Activated CD4-positive, alpha-beta T cell treated with anti-CD3 and anti-CD28 coated beads for 36 hours (primary cell): ENCODE measurements at regions of chr1 and their contacts with region 1.

Region 1: DNA sequence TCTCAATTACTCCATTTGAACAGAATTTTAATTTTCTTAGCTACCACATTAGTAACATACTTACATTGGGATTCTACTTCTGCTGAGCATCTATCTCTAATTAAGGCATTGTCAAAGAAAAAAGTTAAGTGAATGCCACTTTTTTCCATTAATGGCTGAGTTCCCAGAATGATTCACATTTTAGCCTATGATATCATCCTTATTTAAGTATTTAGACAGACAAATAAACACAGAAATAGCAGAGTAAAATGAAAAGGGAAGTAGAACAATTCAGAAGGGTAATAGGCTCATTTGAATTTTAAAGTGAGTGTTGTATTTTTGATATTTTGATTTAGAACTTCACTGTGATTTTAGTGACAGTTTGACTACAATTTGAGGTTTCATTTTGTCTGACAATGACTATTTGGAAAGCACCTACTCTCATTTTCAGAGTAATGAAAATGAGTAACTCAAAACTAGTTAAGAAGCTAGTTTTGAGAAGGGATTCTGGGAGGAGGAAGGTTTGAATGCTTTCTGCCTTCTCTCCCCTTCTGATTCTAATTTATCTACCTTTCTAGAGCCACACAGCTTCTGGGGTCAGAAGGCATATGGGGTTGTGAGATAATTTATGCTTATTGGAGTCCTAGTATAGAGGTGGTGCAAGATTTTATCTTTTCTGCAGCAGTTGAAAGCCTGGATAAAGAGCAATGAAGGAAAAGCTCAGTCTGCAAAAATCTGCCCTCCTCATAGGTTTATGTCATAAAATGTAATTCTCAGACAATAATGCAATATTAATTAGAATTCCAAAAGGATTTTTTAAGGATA is 15.5 kb downstream of the LYPLAL1 start:
- DNase-seq: no peak
- ATAC-seq: peak; percentile 92
- H3K4me3 Mint-ChIP-seq: no peak overlapping the region
- H3K27ac Mint-ChIP-seq: no peak overlapping the region
- H3K4me1 Mint-ChIP-seq: peaks cover 34% of the 10 kb centered on the region
- H3K27me3 Mint-ChIP-seq: no peaks in the 10 kb centered on the region

Region 2: DNA sequence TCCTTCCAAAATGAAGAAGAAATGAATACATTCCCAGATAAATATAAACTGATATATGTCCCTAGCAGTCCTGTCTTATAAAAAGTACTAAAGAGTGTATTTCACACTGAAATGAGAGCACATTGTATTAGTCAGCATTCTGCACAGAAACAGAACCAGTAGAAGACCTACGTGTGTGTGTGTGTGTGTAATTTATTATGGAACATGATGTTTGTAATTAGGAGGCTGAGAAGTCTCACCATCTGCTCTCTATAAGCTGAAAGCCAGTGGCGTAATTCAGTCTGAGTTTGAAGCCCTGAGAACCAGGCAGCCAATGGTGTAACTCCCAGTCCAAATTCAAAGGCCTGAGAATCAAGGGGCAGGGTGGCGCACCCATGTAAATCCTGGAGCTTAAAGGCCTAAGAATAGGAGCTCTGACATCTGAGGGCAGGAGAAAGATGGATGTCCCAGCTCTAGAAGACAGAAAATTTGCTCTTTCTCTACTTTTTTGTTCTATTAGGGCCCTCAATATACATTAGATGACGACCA is 162.0 kb before region 1 on chr1:
- CTCF ChIA-PET with region 1: no interaction called
- POLR2A ChIA-PET with region 1: no interaction called
- intact Hi-C with region 1: no loop called
- DNase-seq: no peak
- ATAC-seq: no peak
- H3K4me3 Mint-ChIP-seq: no peak overlapping the region
- H3K27ac Mint-ChIP-seq: no peak overlapping the region
- H3K4me1 Mint-ChIP-seq: no peaks in the 10 kb centered on the region
- H3K27me3 Mint-ChIP-seq: no peaks in the 10 kb centered on the region

Region 3: GRCh38 chr1:219058891-219059820 is 130.1 kb before region 1 on chr1:
- CTCF ChIA-PET with region 1: no interaction called
- POLR2A ChIA-PET with region 1: no interaction called
- intact Hi-C with region 1: loop called in 1 of 2 experiments (anchors 1 kb)
- DNase-seq: no peak
- ATAC-seq: peak; percentile 83
- H3K4me3 Mint-ChIP-seq: no peak overlapping the region
- H3K27ac Mint-ChIP-seq: no peak overlapping the region
- H3K4me1 Mint-ChIP-seq: peaks cover 7% of the 10 kb centered on the region
- H3K27me3 Mint-ChIP-seq: peaks cover 2% of the 10 kb centered on the region